CD14-positive monocyte (primary cell): ENCODE measurements at regions of chr11 and their contacts with region 1.

Region 1: GRCh38 chr11:59668950-59669610 is at the start of gene PATL1:
- DNase-seq: peak; percentile 99 to 100 (median 99)
- H3K4me3 ChIP-seq: peak within 1 kb of the TSS; percentile 82 to 97 (median 92)
- H3K4me3 Mint-ChIP-seq: peak within 1 kb of the TSS; percentile 90 to 97
- H3K27ac ChIP-seq: peak within 1 kb of the TSS; percentile 98 to 99
- H3K27ac Mint-ChIP-seq: peak within 1 kb of the TSS; percentile 99 to 100 (median 100)
- H3K4me1 ChIP-seq: peaks cover 27 to 34% of the 10 kb centered on the region in 2 donors
- H3K4me1 Mint-ChIP-seq: peaks cover 34% of the 10 kb centered on the region
- H3K27me3 ChIP-seq: no peaks in the 10 kb centered on the region
- H3K27me3 Mint-ChIP-seq: no peaks in the 10 kb centered on the region
- CTCF ChIP-seq: no peak
- polyA plus RNA-seq, gene PATL1: 4.1 to 49.3 (median 5.1) TPM

Region 2: DNA sequence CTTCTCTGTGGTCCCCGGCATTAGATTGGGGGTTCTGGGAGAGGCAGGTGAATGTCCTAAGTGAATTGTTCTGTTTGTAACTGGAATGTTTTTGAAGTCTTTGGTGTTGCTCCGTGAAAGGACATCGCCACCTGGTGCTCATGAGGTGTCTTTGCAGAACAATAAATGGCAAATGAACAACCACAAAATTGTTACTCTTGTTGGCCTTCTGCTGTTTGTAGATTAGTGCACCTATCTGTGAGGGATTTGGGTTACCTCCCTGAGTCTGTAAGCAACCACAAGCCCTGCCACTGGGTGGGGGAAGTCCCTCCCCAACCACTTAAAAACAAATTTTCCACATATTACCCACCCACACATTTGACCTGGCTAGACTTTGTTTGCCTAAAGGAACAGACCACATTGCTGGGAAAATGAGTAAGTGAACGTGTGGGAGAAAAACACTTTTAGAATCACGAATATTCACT is 461.1 kb before region 1 on chr11:
- intact Hi-C with region 1: loop called in 1 of 2 experiments (anchors 5 kb)
- DNase-seq: peak in 2 of 3 donors; percentile 51 to 64
- H3K4me3 ChIP-seq: peak overlapping the region; percentile 70 to 99 (median 98)
- H3K4me3 Mint-ChIP-seq: peak overlapping the region; percentile 98 to 99
- H3K27ac ChIP-seq: peak overlapping the region; percentile 2 to 93
- H3K27ac Mint-ChIP-seq: peak overlapping the region; percentile 86 to 98 (median 97)
- H3K4me1 ChIP-seq: peaks cover 37 to 70% of the 10 kb centered on the region in 2 donors
- H3K4me1 Mint-ChIP-seq: peaks cover 51% of the 10 kb centered on the region
- H3K27me3 ChIP-seq: no peaks in the 10 kb centered on the region
- H3K27me3 Mint-ChIP-seq: no peaks in the 10 kb centered on the region
- CTCF ChIP-seq: peak; percentile 80

Region 3: DNA sequence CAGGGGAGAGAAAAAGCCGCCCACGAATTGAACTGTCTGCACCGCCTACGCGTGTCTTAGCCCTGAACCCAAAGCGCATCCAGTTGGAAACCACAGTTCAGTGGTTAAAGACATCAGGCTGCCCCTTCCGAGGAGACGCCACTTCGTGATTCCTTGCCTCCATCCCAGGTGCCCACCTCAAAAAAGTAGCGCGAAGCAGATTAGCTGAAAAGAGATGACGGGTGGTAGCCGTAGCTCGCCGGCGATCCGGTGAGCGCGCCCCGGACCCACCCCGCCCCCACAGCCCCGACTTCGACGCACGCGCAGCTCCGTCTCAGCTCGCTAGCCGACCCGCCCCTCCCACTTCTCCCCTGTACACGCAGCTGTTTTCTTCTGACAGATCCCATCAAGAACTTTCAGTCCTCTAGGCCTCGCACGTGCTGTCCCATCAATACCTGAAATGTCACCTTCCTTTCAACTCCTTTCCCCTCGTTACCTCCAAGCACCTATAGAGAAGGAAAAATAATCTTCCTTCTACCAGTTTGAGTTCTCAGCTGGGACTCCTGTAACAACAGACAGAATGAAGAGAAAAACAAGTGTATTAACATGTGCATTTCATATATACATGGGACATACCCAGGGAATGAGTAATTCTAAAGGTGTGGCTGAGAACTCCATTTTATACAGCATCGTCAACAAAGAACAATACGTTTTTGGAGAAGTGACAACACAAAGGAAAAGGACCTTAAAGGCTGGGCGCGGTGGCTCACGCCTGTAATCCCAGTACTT is 108.2 kb before region 1 on chr11:
- intact Hi-C with region 1: loop called in 1 of 2 experiments (anchors 10 kb)
- DNase-seq: peak; percentile 55 to 67 (median 57)
- H3K4me3 ChIP-seq: peak overlapping the region; percentile 80 to 87 (median 86)
- H3K4me3 Mint-ChIP-seq: peak overlapping the region; percentile 85 to 98
- H3K27ac ChIP-seq: peak overlapping the region in 1 of 2 donors; percentile 5
- H3K27ac Mint-ChIP-seq: peak overlapping the region in 6 of 7 donors; percentile 56 to 87 (median 71)
- H3K4me1 ChIP-seq: peaks cover 40 to 52% of the 10 kb centered on the region in 2 donors
- H3K4me1 Mint-ChIP-seq: peaks cover 51% of the 10 kb centered on the region
- H3K27me3 ChIP-seq: peaks cover 16 to 29% of the 10 kb centered on the region in 2 donors
- H3K27me3 Mint-ChIP-seq: peaks cover 29 to 37% (median 33%) of the 10 kb centered on the region in 3 donors
- CTCF ChIP-seq: no peak

Region 4: DNA sequence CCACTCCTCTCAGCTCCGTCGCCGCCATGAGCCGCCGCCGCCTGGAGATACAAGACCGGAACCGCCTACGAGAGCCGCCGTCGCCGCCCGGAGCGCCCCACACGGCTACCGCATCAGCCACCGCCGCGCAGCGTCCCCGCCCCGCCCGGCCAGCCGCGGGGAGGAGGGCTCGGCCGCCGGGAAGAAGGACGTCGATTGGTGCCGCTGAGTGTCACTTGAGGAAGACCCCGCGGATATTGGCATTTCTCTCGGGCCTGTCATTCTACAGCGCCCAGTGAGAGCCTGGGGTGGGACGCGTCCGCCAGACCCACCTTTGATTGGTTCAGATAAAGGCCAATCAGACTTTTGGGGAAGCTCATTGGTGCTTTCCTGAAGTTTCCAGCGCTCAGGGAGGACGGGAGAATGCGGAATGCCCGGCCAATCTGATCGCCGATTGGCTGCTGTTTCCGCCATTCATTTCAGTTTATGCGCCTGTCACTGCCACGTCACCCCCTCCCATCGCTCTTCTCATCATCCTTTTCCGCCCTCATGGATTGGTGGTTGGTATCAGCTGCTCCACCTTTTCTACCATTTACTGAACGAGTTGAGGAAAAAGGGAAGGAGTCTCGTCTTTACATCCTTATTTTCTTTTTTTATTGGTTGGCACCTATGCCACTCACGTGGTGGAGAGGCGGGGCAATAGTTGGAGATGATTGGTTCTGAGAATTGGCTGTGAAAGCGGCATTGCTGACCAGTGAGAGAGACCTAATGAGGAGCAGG is 53.3 kb before region 1 on chr11 and contains the start of gene OSBP:
- intact Hi-C with region 1: loop called (anchors 2 to 5 kb)
- DNase-seq: peak; percentile 100
- H3K4me3 ChIP-seq: peak within 1 kb of the TSS; percentile 81 to 93 (median 90)
- H3K4me3 Mint-ChIP-seq: peak within 1 kb of the TSS; percentile 88 to 98
- H3K27ac ChIP-seq: peak within 1 kb of the TSS; percentile 96 to 97
- H3K27ac Mint-ChIP-seq: peak within 1 kb of the TSS; percentile 96 to 100 (median 99)
- H3K4me1 ChIP-seq: peaks cover 22 to 34% of the 10 kb centered on the region in 2 donors
- H3K4me1 Mint-ChIP-seq: peaks cover 36% of the 10 kb centered on the region
- H3K27me3 ChIP-seq: no peaks in the 10 kb centered on the region
- H3K27me3 Mint-ChIP-seq: peaks cover 0 to 3% (median 0%) of the 10 kb centered on the region in 3 donors
- CTCF ChIP-seq: no peak
- polyA plus RNA-seq, gene OSBP: 9.8 to 15.3 (median 11.9) TPM

Region 5: GRCh38 chr11:59753650-59754493 is 84.8 kb after region 1 on chr11:
- intact Hi-C with region 1: loop called (anchors 10 kb)
- DNase-seq: peak; percentile 80 to 87 (median 87)
- H3K4me3 ChIP-seq: peak overlapping the region; percentile 63 to 94 (median 82)
- H3K4me3 Mint-ChIP-seq: peak overlapping the region; percentile 99
- H3K27ac ChIP-seq: peak overlapping the region in 1 of 2 donors; percentile 77
- H3K27ac Mint-ChIP-seq: peak overlapping the region; percentile 76 to 92 (median 90)
- H3K4me1 ChIP-seq: peaks cover 31 to 38% of the 10 kb centered on the region in 2 donors
- H3K4me1 Mint-ChIP-seq: peaks cover 38% of the 10 kb centered on the region
- H3K27me3 ChIP-seq: no peaks in the 10 kb centered on the region
- H3K27me3 Mint-ChIP-seq: peaks cover 0 to 3% (median 0%) of the 10 kb centered on the region in 3 donors
- CTCF ChIP-seq: peak; percentile 90

Region 6: DNA sequence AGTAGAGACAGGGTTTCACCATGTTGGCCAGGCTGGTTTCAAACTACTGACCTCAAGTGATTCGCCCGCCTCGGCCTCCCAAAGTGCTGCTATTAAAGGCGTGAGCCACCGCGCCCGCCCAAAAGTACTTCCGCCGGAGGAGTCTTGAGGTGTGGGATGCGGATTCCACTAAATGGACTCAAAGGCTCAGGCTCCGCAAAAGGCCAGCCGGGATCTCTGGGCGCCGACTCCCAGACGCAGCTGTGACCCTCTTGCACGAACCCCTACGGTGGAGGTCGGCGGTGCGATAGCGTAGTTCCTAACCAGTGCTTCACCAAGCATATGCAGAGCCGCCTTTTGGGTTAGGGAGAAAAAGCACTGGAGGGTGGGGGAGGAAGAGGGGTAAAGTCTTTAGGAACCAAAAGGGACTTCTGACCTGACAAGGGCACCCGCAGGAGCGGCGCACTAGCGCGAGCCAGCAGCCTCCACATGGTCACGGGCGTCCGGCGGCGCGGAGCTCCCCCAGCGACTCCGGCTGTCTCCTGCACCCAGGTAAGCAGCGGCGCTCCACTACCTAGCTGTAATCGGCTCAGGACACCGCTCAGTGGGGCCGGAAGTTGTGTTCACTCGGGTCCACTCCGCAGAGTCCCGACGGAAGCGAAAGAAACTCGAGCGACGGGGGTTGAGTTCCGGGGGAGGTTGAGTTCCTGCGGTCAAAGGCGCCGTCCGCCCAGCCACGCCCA is 141.3 kb after region 1 on chr11 and contains the start of gene MRPL16:
- intact Hi-C with region 1: loop called in 1 of 2 experiments (anchors 5 kb)
- DNase-seq: peak; percentile 83 to 88 (median 87)
- H3K4me3 ChIP-seq: peak within 1 kb of the TSS; percentile 69 to 88 (median 81)
- H3K4me3 Mint-ChIP-seq: peak within 1 kb of the TSS; percentile 90 to 95
- H3K27ac ChIP-seq: peak within 1 kb of the TSS; percentile 71 to 84
- H3K27ac Mint-ChIP-seq: peak within 1 kb of the TSS; percentile 87 to 94 (median 92)
- H3K4me1 ChIP-seq: peaks cover 23 to 34% of the 10 kb centered on the region in 2 donors
- H3K4me1 Mint-ChIP-seq: peaks cover 24% of the 10 kb centered on the region
- H3K27me3 ChIP-seq: no peaks in the 10 kb centered on the region
- H3K27me3 Mint-ChIP-seq: no peaks in the 10 kb centered on the region
- CTCF ChIP-seq: no peak
- polyA plus RNA-seq, gene MRPL16: 34.1 to 75.0 (median 71.9) TPM

Region 7: DNA sequence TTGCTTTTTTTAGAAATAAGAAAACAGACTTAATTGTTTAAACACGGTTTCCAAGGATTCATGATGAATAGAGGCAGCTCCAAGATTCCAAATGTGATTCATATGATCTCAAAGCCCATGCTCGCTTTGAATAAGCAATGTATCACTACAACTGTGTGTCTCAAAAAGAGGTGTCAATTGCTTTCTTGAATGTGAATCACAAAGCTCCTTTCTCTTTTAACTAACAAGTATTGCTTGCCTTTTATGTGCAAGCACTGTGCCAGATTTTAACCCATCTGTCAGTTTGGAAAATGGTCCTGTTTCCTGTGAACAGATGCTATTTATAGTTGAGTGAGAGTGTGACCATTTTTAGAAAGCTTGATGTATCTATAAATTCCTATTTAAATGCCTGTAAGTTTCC is 275.6 kb after region 1 on chr11:
- intact Hi-C with region 1: no loop called
- DNase-seq: no peak
- H3K4me3 ChIP-seq: no peak overlapping the region
- H3K4me3 Mint-ChIP-seq: no peak overlapping the region
- H3K27ac ChIP-seq: no peak overlapping the region
- H3K27ac Mint-ChIP-seq: no peak overlapping the region
- H3K4me1 ChIP-seq: peaks cover 0 to 2% of the 10 kb centered on the region in 2 donors
- H3K4me1 Mint-ChIP-seq: peaks cover 5% of the 10 kb centered on the region
- H3K27me3 ChIP-seq: no peaks in the 10 kb centered on the region
- H3K27me3 Mint-ChIP-seq: peaks cover 0 to under 1% (median 0%) of the 10 kb centered on the region in 3 donors
- CTCF ChIP-seq: no peak